ENCODE measurements at regions of chr17 and their contacts with region 1.

Region 1: GRCh38 chr17:4554997-4555799 is at the start of gene MYBBP1A:
- DNase-seq: peak; percentile 100
- H3K4me3 ChIP-seq: peak within 1 kb of the TSS; percentile 95 to 99
- H3K27ac ChIP-seq: peak within 1 kb of the TSS; percentile 62 to 94
- H3K4me1 ChIP-seq: peaks cover 7 to 18% of the 10 kb centered on the region in 2 experiments; a peak in 1 of 4 replicates
- H3K27me3 ChIP-seq: no peaks in the 10 kb centered on the region
- CTCF ChIP-seq: peak; percentile 52
- EP300 ChIP-seq: no peak
- RAD21 ChIP-seq: no peak
- polyA plus RNA-seq, gene MYBBP1A: 74.7 and 93.0 TPM in 2 replicates

Region 2: GRCh38 chr17:4536259-4536741 is 18.9 kb before region 1 on chr17:
- CTCF ChIA-PET with region 1: interaction called, 11 read pairs
- POLR2A ChIA-PET with region 1: interaction called, 8 read pairs
- DNase-seq: no peak
- H3K4me3 ChIP-seq: no peak overlapping the region
- H3K27ac ChIP-seq: no peak overlapping the region
- H3K4me1 ChIP-seq: peaks cover 0 to 31% of the 10 kb centered on the region in 2 experiments; a peak in 1 of 4 replicates
- H3K27me3 ChIP-seq: no peaks in the 10 kb centered on the region
- CTCF ChIP-seq: no peak
- EP300 ChIP-seq: no peak
- RAD21 ChIP-seq: no peak

Region 3: GRCh38 chr17:4541328-4542002 is 13.7 kb before region 1 on chr17:
- CTCF ChIA-PET with region 1: interaction called, 11 read pairs
- POLR2A ChIA-PET with region 1: interaction called, 8 read pairs
- DNase-seq: no peak
- H3K4me3 ChIP-seq: no peak overlapping the region
- H3K27ac ChIP-seq: no peak overlapping the region
- H3K4me1 ChIP-seq: peaks cover 0 to 7% of the 10 kb centered on the region in 2 experiments; a peak in 1 of 4 replicates
- H3K27me3 ChIP-seq: no peaks in the 10 kb centered on the region
- CTCF ChIP-seq: no peak
- EP300 ChIP-seq: no peak
- RAD21 ChIP-seq: 0 out of 2 replicates have a peak, but pooled peaks have one; percentile 6